Esophagus muscularis mucosa (tissue), 4 donors: ENCODE measurements at regions of chr22 and their contacts with region 1.

Region 1: GRCh38 chr22:40838486-40838885 is 18.0 kb downstream of the ST13 start:
- DNase-seq: no peak
- H3K4me3 ChIP-seq: no peak overlapping the region
- H3K27ac ChIP-seq: no peak overlapping the region
- H3K4me1 ChIP-seq: peaks cover 0 to 17% (median 13%) of the 10 kb centered on the region in 4 donors
- H3K27me3 ChIP-seq: no peaks in the 10 kb centered on the region
- CTCF ChIP-seq: no peak
- EP300 ChIP-seq: no peak
- POLR2A ChIP-seq: no peak

Region 2: GRCh38 chr22:40797427-40797826 is 41.1 kb before region 1 on chr22:
- intact Hi-C with region 1: no loop called
- DNase-seq: no peak
- H3K4me3 ChIP-seq: no peak overlapping the region
- H3K27ac ChIP-seq: no peak overlapping the region
- H3K4me1 ChIP-seq: peaks cover 0 to 5% (median 0%) of the 10 kb centered on the region in 4 donors
- H3K27me3 ChIP-seq: no peaks in the 10 kb centered on the region
- CTCF ChIP-seq: no peak
- EP300 ChIP-seq: no peak
- POLR2A ChIP-seq: no peak

Region 3: GRCh38 chr22:41169157-41169556 is 330.7 kb after region 1 on chr22:
- intact Hi-C with region 1: loop called (anchors 10 kb)
- DNase-seq: no peak
- H3K4me3 ChIP-seq: no peak overlapping the region
- H3K27ac ChIP-seq: no peak overlapping the region
- H3K4me1 ChIP-seq: peaks cover 0 to 9% (median 3%) of the 10 kb centered on the region in 4 donors
- H3K27me3 ChIP-seq: no peaks in the 10 kb centered on the region
- CTCF ChIP-seq: no peak
- EP300 ChIP-seq: no peak
- POLR2A ChIP-seq: no peak